Cardiac septum (tissue), 1 donor: ENCODE measurements at regions of chr15 and their contacts with region 1.

Region 1: GRCh38 chr15:58227706-58228543 is 89.7 kb downstream of the AQP9 start:
- DNase-seq: peak; percentile 86

Region 2: DNA sequence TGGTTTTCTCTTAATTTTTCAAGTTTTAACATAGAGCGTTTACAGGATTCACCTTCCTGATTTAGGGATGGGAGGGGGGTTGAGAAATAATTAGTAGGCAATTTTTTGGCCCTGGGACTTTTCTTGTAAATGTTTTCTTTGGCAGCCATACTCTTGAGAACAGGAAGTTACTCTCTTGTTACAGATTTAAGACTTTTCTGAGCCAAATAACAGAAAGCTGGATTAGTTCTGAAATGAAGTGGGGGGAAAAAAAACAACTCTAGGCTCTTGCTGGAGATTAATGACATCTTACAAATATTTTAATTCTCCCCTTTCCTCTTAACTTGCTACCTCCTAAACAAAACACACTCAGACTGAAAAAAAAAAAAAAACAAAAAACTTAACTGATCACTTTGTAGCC is 535.2 kb before region 1 on chr15:
- intact Hi-C with region 1: no loop called
- DNase-seq: no peak

Region 3: GRCh38 chr15:58109419-58109818 is 118.5 kb before region 1 on chr15:
- intact Hi-C with region 1: no loop called
- DNase-seq: no peak

Region 4: GRCh38 chr15:58154769-58155168 is 73.2 kb before region 1 on chr15:
- intact Hi-C with region 1: no loop called
- DNase-seq: no peak

Region 5: DNA sequence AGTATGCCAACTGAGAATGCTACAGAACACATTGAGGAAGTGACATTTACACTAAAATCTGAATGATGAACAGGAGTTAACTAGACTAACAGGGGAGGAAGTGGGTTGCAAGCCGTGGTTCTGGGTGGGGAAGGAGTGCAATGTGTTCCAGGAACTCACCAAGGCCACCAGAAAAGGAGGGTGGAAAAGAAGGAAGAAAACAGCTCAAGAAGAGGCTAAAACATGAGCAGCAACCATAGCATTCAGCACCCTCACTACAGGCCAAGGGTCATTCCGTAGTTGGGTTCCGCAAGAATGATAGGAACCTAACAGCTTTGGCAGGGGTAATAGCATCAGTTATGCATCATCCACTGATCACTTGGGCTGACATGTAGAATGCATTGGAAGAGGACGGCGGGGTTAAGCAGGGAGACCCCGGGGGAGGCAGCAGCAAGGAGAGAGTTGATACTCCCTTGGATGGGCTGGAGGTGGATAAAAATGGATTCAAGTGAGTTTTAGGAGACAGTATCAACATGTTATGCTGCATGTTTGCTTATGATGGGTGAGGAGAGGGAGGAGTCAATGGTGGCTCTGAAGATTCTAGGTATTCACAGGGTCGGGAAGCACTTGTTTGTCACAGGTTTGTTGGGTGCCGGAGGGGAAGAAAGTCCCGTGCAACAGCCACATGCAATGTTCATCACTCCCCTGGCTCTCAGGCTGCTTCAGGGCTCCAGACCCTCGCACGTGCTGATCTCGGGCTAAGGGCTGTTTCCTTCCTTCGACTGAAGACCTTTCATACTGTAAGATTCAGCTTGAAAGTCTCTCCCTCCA is 257.1 kb after region 1 on chr15:
- intact Hi-C with region 1: no loop called
- DNase-seq: no peak

Region 6: DNA sequence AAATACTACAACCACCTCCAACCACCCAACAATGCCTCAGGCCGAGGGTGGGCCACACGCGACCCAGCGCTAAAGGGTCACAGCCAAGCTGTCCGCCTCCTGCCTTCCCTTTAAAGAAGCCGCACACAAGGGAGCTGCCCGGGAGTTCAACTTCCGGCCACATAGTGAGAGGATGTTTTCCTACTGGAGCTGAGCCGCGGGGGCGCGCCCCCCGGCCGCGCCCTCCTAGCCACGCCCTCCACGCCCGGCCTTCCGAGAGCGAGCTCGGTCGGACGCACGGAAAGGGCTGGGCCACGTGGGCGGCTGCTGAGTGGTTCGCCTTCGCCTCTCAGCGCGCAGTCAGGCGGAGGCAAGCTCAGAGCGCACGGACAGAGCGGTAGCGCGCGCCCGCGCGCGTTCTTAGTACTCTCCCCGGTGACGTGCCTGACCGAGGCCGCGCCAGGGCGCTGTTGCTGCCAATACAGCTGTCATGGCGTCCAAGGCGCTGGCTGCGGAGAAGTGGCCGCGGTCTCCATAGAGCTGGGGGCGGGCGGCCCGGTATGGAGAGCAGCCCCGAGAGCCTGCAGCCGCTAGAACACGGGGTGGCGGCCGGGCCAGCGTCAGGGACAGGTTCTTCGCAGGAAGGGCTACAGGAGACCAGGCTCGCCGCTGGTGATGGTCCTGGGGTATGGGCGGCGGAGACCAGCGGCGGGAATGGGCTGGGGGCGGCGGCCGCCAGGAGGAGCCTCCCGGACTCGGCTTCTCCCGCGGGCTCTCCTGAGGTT is 543.1 kb after region 1 on chr15 and contains the start of gene MINDY2:
- intact Hi-C with region 1: loop called (anchors 10 kb)
- DNase-seq: peak; percentile 99
- total RNA-seq, gene MINDY2: 33.4 TPM

Region 7: DNA sequence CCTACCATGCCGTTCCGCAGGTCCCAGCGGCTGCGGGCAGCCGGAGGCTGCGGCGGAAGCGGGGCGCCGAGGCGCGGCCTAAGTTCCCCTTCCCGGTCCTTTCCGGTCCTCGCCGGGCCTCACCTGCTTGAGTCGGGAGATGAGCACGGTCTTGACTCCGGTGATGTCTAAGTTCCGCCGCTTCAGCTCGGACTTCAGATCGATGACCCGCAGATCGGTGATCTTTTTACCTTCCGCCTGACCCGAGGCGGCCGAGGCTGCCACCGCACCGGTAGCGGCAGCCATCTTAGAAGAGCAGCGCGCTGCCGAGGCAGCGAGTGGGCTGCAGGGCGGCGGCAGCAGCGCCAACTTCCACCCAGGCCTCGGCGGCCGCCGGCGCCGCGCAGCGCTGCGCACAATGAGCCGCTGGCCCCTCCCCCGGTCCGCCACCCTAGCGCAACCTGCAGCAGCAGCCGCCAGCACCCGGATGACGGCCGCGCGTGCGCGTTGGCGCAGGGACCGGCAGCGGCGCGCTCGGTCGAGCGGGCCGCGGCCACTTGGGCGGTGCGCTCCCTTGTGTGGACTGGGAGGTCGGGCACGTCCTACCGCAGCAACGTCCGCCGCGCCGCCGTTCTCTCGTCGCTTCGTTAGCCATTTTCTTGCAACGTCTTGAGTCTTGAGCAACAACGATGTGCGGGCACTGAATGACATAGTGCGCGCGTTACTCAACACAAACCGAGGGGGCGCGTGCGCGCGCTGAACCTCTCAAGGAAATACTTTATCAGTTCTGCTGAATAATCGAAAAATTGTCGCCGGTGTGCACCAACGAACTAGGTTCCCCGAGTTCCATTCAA is 705.6 kb after region 1 on chr15 and contains the start of gene SLTM:
- intact Hi-C with region 1: loop called (anchors 5 kb)
- DNase-seq: peak; percentile 97
- total RNA-seq, gene SLTM: 60.9 TPM